ENCODE measurements at regions of chr9 and their contacts with region 1.

Region 1: DNA sequence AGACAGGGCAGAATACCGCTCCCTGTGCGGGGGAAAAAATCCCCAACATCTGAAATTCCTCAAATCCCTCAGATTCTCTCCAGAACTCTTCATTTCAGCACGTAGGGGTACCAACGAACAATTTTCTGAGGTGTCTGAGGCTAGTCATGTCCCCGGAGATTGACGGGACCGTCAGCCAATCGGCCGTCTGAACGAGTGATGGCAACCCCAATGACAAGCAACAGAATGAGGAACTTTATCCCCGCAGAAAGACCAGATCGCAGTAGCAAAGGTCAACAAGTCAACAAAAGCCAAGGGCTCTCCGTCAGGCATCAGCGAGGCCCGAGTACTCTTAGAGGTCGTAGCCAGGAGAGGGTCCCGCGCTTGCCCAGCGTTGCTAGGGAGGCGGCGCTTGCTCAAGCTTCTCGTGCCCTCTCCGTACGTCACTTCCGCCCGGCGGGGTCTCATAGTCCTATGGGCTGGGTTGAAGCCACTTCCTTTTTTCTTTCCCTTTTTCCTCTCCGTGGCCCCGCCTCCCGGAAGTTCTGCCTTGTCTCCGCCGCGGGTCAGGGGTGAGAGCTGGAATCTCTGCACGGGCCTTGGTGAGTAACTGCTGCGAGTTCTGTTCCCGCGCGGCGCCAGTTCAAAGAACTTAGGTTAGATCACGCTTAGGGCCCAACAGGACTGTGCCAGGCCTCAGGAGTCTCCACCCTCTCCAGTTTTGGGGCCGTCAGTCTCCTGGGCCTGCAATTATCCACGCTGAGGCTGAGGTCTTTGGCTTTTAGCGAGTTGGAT is at the start of gene RNF20:
- DNase-seq: peak; percentile 96

Region 2: DNA sequence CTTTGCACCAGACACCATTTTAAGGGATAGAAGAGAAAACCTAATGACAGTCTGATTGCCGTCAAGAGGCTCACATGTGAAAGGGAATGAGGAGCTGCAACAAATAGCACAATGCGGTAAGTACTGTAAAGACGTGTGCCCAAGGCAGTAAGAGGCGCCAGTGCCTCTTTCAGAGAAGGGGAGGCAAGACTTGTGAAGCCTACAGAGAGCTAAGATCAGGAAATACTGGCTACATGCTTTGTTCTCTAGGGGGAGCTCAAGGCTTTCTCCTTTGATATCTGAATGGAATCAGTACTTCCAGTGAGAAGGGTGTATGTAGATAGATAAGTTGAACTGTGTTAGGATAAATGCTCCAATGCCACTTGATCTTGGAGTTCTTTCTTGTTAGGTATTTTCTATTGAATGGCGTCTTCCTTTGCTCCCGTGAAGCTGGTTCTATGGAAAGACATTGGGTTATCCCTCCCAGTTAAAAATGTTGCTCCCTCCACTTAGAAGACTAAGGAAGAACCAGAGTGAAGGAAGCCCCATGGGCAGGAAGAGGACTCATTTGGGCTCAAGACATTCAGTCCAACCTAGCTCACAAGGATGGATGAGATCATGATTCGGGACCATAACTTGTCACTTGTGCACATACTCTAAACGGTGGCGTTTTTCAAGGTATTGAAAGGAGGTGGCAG is 74.4 kb before region 1 on chr9:
- CTCF ChIA-PET with region 1: interaction called, 14 read pairs
- POLR2A ChIA-PET with region 1: interaction called, 10 read pairs
- DNase-seq: peak; percentile 63

Region 3: DNA sequence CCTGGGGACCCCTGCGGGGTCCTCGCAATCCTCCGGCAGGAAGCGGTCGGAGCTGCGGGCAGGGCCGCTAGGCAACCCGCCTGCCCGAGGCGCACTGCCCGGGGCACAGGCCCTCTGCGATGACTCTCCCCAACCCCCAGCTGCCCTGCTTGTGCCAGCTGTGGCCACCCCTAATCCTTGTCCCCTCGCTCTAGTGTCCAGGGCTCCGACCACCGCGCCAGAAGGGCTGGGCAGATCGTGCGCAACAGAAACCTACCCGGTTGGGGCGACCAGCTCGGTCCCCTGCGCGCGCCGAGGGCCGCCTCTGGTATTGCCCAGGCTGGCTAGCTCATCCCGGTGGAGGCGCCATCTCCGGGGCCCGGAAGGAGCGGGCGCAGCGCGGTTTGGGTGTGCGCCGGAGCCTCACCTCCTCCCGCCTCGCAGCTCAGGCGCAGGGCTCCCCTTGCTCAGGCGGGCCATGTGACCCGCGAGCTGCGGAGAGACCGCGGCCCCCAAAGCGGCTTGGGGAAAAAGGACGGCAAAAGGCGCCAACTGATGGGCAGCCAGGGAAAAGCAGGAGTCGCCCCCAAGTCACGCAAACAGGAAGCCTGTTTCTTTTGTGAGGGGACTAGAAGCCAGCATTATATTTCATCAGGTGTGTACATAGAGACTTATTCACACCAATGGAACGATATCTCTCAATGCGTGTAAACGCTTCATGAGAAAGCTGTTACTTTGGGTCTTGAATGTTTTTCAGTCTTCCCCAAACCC is 46.7 kb before region 1 on chr9:
- CTCF ChIA-PET with region 1: interaction called, 5 read pairs
- POLR2A ChIA-PET with region 1: interaction called, 11 read pairs
- DNase-seq: peak; percentile 54

Region 4: DNA sequence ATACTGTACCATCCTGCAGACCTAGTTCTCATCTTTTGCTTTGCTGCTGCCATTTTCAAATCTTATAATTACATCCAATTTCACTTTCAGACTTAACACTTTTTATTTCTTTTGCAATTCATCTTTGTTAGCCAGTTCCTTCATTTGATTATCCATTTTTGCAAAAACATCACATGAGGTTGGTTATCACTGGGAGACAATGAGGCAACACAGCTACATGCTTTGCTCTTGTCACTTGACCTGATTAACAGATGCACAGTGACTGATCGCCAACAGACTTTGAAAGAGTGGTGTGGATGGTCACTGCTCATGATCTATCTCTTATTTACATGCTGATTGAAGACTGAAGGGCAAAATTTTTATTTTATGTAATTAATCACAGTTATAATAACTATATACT is 16.9 kb before region 1 on chr9:
- CTCF ChIA-PET with region 1: no interaction called
- POLR2A ChIA-PET with region 1: no interaction called
- DNase-seq: no peak

Measured in HEK293T (cell line).